Natural killer cell (primary cell): ENCODE measurements at regions of chr11 and their contacts with region 1.

Region 1: GRCh38 chr11:57480409-57481137 is 20.2 kb downstream of the RTN4RL2 start:
- DNase-seq: peak; percentile 48 to 72
- ATAC-seq: peak; percentile 48 to 64 (median 57)
- H3K4me3 ChIP-seq: no peak overlapping the region
- H3K4me3 Mint-ChIP-seq: peak overlapping the region; percentile 74
- H3K27ac ChIP-seq: no peak overlapping the region
- H3K27ac Mint-ChIP-seq: no peak overlapping the region
- H3K4me1 ChIP-seq: peaks cover 45% of the 10 kb centered on the region
- H3K4me1 Mint-ChIP-seq: peaks cover 6 to 28% of the 10 kb centered on the region in 2 donors
- H3K27me3 ChIP-seq: peaks cover 10% of the 10 kb centered on the region
- H3K27me3 Mint-ChIP-seq: peaks cover 7 to 24% of the 10 kb centered on the region in 2 donors
- CTCF ChIP-seq: peak; percentile 54

Region 2: GRCh38 chr11:57345555-57346211 is 134.9 kb before region 1 on chr11:
- intact Hi-C with region 1: loop called (anchors 5 kb)
- DNase-seq: peak; percentile 57 to 88
- ATAC-seq: peak; percentile 69 to 87 (median 86)
- H3K4me3 ChIP-seq: no peak overlapping the region
- H3K4me3 Mint-ChIP-seq: no peak overlapping the region
- H3K27ac ChIP-seq: no peak overlapping the region
- H3K27ac Mint-ChIP-seq: no peak overlapping the region
- H3K4me1 ChIP-seq: peaks cover 17% of the 10 kb centered on the region
- H3K4me1 Mint-ChIP-seq: peaks cover 16 to 19% of the 10 kb centered on the region in 2 donors
- H3K27me3 ChIP-seq: no peaks in the 10 kb centered on the region
- H3K27me3 Mint-ChIP-seq: peaks cover 0 to under 1% of the 10 kb centered on the region in 2 donors
- CTCF ChIP-seq: peak; percentile 84

Region 3: GRCh38 chr11:57426929-57427726 is 53.4 kb before region 1 on chr11 and contains the start of gene SLC43A3:
- intact Hi-C with region 1: no loop called
- DNase-seq: peak; percentile 52 to 76
- ATAC-seq: peak; percentile 50 to 69 (median 57)
- H3K4me3 ChIP-seq: peak within 1 kb of the TSS; percentile 48
- H3K4me3 Mint-ChIP-seq: peak within 1 kb of the TSS; percentile 91
- H3K27ac ChIP-seq: peak within 1 kb of the TSS; percentile 47
- H3K27ac Mint-ChIP-seq: peak within 1 kb of the TSS; percentile 79 to 90
- H3K4me1 ChIP-seq: peaks cover 47% of the 10 kb centered on the region
- H3K4me1 Mint-ChIP-seq: peaks cover 43 to 54% of the 10 kb centered on the region in 2 donors
- H3K27me3 ChIP-seq: no peaks in the 10 kb centered on the region
- H3K27me3 Mint-ChIP-seq: peaks cover 0 to 7% of the 10 kb centered on the region in 2 donors
- CTCF ChIP-seq: no peak
- total RNA-seq, gene SLC43A3: 17.0 to 22.2 (median 20.7) TPM

Region 4: DNA sequence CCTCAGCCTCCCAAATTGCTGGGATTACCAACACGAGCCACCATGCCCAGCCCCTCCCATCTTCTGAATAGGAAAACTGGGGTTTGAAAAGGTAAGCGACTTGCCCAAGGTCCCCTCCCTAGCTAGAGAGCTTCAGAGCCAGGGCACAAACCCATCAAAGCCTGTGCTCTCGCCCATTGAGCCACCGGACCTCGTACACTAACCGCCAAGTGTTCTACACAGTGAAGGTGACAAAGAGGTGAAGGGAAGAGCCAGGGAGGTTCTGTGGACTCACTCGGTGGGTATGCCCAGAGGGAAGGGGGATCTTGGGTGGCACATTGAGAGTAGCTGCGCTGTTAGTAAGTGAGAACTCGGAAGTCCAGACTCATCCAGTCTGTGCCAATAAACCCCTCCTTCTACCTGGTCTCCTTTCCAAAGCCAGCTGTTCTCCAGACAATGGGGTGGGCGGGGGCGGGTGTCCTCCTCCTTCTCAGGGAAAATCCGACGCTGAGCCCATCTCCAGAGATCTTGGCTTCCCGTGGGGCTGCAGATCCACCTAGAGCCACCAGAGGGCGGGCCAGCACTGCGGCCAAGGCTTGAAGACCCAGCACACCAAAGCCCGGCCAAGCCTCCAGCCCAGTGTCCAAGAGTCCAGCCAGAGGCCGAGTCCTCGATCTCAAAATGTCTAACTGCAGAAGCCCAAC is 23.5 kb before region 1 on chr11:
- intact Hi-C with region 1: loop called (anchors 1 kb)
- DNase-seq: peak; percentile 73 to 85
- ATAC-seq: peak; percentile 77 to 80 (median 78)
- H3K4me3 ChIP-seq: no peak overlapping the region
- H3K4me3 Mint-ChIP-seq: peak overlapping the region; percentile 73
- H3K27ac ChIP-seq: no peak overlapping the region
- H3K27ac Mint-ChIP-seq: no peak overlapping the region
- H3K4me1 ChIP-seq: peaks cover 41% of the 10 kb centered on the region
- H3K4me1 Mint-ChIP-seq: peaks cover 24 to 39% of the 10 kb centered on the region in 2 donors
- H3K27me3 ChIP-seq: peaks cover 33% of the 10 kb centered on the region
- H3K27me3 Mint-ChIP-seq: peaks cover 23 to 28% of the 10 kb centered on the region in 2 donors
- CTCF ChIP-seq: peak; percentile 95

Region 5: DNA sequence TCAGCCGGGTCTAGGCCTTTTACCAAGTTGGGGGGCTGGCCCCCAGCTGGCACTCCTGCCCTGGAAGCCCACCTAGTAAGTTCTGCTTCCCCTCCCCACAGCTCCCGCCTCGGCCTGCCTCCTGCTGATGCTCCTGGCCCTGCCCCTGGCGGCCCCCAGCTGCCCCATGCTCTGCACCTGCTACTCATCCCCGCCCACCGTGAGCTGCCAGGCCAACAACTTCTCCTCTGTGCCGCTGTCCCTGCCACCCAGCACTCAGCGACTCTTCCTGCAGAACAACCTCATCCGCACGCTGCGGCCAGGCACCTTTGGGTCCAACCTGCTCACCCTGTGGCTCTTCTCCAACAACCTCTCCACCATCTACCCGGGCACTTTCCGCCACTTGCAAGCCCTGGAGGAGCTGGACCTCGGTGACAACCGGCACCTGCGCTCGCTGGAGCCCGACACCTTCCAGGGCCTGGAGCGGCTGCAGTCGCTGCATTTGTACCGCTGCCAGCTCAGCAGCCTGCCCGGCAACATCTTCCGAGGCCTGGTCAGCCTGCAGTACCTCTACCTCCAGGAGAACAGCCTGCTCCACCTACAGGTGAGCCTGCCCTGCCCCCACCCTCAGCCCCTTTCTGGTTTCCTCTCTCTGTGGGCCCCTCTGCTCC is 12.9 kb before region 1 on chr11:
- intact Hi-C with region 1: no loop called
- DNase-seq: no peak
- ATAC-seq: no peak
- H3K4me3 ChIP-seq: no peak overlapping the region
- H3K4me3 Mint-ChIP-seq: no peak overlapping the region
- H3K27ac ChIP-seq: no peak overlapping the region
- H3K27ac Mint-ChIP-seq: no peak overlapping the region
- H3K4me1 ChIP-seq: peaks cover 11% of the 10 kb centered on the region
- H3K4me1 Mint-ChIP-seq: peaks cover 7 to 9% of the 10 kb centered on the region in 2 donors
- H3K27me3 ChIP-seq: no peaks in the 10 kb centered on the region
- H3K27me3 Mint-ChIP-seq: peaks cover 4 to 6% of the 10 kb centered on the region in 2 donors
- CTCF ChIP-seq: no peak